ENCODE measurements at regions of chr2 and their contacts with region 1.

Region 1: DNA sequence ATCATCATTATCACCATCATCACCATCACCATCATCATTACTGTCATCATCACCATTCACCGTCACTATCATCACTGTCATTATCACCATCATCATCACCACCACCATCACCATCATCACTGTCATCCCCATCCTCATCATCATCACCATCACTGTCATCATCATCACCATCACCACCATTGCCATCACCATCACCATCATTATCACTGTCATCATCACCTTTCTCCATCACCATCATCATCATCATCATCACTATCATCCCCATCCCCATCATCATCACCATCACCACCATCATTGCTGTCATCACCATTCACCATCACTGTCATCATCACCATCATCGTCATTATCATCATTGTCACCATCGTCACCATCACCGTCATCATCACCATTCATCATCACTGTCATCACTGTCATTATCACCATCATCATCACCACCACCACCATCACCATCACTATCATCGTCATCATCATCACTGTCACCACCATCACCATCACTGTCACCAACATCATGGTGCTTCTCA is 9.8 kb downstream of the HPCAL1 start:
- DNase-seq: no peak
- H3K4me3 ChIP-seq: no peak overlapping the region
- H3K27ac ChIP-seq: no peak overlapping the region
- H3K4me1 ChIP-seq: no peaks in the 10 kb centered on the region
- H3K27me3 ChIP-seq: no peaks in the 10 kb centered on the region
- CTCF ChIP-seq: no peak

Region 2: GRCh38 chr2:10278029-10278762 is 34.3 kb before region 1 on chr2:
- intact Hi-C with region 1: loop called (anchors 5 kb)
- DNase-seq: peak; percentile 80 to 87
- H3K4me3 ChIP-seq: peak overlapping the region in 1 of 2 donors; percentile 2
- H3K27ac ChIP-seq: peak overlapping the region; percentile 28 to 78
- H3K4me1 ChIP-seq: peaks cover 0 to 28% (median 6%) of the 10 kb centered on the region in 4 donors
- H3K27me3 ChIP-seq: no peaks in the 10 kb centered on the region
- CTCF ChIP-seq: no peak

Measured in tibial artery (tissue), 4 donors.